PC-9 (cell line): ENCODE measurements at regions of chr7 and their contacts with region 1.

Region 1: GRCh38 chr7:1086588-1087464 is 1.1 kb upstream of the GPER1 start:
- DNase-seq: peak in 1 of 2 experiments; percentile 70
- H3K4me3 ChIP-seq: no peak overlapping the region
- H3K27ac ChIP-seq: no peak overlapping the region
- H3K4me1 ChIP-seq: 0 out of 2 replicates have a peak, but pooled peaks cover 4% of the 10 kb centered on the region
- H3K27me3 ChIP-seq: no peaks in the 10 kb centered on the region
- CTCF ChIP-seq: peak; percentile 97

Region 2: DNA sequence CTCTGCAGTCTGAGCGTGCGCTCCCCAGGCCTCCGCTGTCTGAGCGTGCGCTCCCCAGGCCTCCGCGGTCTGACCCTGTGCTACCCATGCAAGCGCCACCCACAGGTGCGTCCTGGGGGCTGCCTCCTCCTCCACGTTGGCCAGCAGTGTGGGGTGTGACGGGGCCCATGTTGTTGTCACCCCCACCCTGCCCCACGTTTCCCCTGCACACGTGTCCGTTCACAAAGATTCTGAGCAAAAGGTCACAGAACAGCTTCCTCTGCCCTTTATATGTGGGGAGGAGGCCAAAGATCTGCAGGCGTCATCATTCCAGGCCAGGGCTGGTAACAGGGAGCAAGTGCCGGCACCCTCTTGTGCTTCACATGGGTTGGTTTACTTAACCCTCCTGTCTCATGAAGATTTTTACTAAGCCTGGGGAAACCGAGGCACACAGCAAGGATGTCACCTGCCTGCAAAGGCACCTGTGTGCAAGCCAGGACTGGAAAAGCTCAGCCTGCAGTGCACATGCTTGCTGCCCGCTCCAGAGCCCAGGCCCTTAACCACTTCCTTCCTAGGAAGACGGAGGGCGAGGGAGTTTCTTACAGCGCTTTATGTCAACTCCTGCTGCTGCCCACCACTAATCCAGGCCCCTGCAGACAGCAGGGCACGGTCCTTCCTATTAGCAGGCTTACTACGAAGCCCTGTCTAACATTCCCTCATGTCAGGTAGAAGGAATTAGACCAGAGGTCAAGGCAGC is 37.7 kb before region 1 on chr7:
- CTCF ChIA-PET with region 1: interaction called, 16 read pairs
- POLR2A ChIA-PET with region 1: no interaction called
- intact Hi-C with region 1: no loop called
- DNase-seq: no peak
- H3K4me3 ChIP-seq: no peak overlapping the region
- H3K27ac ChIP-seq: no peak overlapping the region
- H3K4me1 ChIP-seq: peaks cover 31% of the 10 kb centered on the region
- H3K27me3 ChIP-seq: no peaks in the 10 kb centered on the region
- CTCF ChIP-seq: no peak

Region 3: DNA sequence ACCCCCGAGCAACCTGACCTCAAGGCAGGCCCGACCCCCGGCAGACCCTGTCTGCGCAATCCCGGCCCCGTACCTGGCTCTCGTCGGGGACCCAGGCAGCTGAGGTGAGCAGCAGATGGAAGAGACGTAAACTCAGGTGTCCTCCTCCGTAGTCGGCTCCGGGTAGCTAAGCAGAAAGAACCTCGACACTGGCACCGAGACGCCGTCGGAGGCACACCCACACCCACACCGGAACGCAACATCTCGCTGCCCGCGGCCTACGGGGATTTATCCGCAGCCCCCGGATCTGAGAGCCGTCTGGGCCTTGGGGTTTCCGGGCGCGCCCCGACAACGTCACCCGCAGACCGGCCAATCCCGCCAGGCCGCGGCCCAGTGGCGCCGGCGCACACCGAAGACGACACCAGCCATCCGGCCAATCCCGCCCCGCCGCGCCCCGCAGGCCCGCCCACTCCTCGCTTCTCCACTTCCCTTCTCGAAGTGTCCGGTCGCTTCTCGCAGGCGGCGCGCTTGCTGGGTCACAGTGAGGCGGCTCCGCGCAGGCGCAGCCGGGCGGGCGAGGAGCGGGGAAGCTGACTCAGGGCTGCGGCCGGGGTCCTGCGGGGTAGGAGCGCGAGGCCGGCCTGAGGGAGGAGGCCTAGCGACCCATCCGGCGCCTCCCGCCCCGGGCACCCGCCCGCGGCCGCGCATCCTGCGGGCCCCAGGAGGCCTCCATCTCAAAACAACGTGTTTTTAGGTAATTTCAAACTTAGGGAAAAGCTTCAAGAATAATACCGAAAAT is 73.3 kb after region 1 on chr7 and contains the start of gene ZFAND2A:
- CTCF ChIA-PET with region 1: no interaction called
- POLR2A ChIA-PET with region 1: no interaction called
- intact Hi-C with region 1: loop called (anchors 5 kb)
- DNase-seq: peak; percentile 94 to 100
- H3K4me3 ChIP-seq: peak within 1 kb of the TSS; percentile 96
- H3K27ac ChIP-seq: peak within 1 kb of the TSS; percentile 77
- H3K4me1 ChIP-seq: peaks cover 45% of the 10 kb centered on the region
- H3K27me3 ChIP-seq: no peaks in the 10 kb centered on the region
- CTCF ChIP-seq: no peak
- total RNA-seq, gene ZFAND2A: 51.2 and 65.1 TPM in 2 replicates

Region 4: GRCh38 chr7:1290026-1290678 is 203.3 kb after region 1 on chr7:
- CTCF ChIA-PET with region 1: interaction called, 14 read pairs
- POLR2A ChIA-PET with region 1: no interaction called
- intact Hi-C with region 1: no loop called
- DNase-seq: no peak
- H3K4me3 ChIP-seq: no peak overlapping the region
- H3K27ac ChIP-seq: no peak overlapping the region
- H3K4me1 ChIP-seq: no peaks in the 10 kb centered on the region
- H3K27me3 ChIP-seq: peaks cover 93% of the 10 kb centered on the region
- CTCF ChIP-seq: no peak

Region 5: GRCh38 chr7:2420216-2420933 is 1333.5 kb after region 1 on chr7:
- CTCF ChIA-PET with region 1: interaction called, 11 read pairs
- POLR2A ChIA-PET with region 1: no interaction called
- intact Hi-C with region 1: no loop called
- DNase-seq: no peak
- H3K4me3 ChIP-seq: no peak overlapping the region
- H3K27ac ChIP-seq: no peak overlapping the region
- H3K4me1 ChIP-seq: peaks cover 10% of the 10 kb centered on the region
- H3K27me3 ChIP-seq: no peaks in the 10 kb centered on the region
- CTCF ChIP-seq: no peak